ENCODE measurements at regions of chr14 and their contacts with region 1.

Region 1: GRCh38 chr14:68824517-68825347 is 31.9 kb upstream of the ZFP36L1 start:
- DNase-seq: peak; percentile 78 to 97
- H3K4me3 ChIP-seq: no peak overlapping the region
- H3K27ac ChIP-seq: no peak overlapping the region
- H3K4me1 ChIP-seq: peaks cover 0 to 7% (median 2%) of the 10 kb centered on the region in 4 experiments; a peak in 3 of 7 replicates
- H3K27me3 ChIP-seq: no peaks in the 10 kb centered on the region
- CTCF ChIP-seq: peak; percentile 93 to 98 (median 96)
- EP300 ChIP-seq: no peak
- POLR2A ChIP-seq: no peak
- RAD21 ChIP-seq: peak; percentile 88 to 89

Region 2: DNA sequence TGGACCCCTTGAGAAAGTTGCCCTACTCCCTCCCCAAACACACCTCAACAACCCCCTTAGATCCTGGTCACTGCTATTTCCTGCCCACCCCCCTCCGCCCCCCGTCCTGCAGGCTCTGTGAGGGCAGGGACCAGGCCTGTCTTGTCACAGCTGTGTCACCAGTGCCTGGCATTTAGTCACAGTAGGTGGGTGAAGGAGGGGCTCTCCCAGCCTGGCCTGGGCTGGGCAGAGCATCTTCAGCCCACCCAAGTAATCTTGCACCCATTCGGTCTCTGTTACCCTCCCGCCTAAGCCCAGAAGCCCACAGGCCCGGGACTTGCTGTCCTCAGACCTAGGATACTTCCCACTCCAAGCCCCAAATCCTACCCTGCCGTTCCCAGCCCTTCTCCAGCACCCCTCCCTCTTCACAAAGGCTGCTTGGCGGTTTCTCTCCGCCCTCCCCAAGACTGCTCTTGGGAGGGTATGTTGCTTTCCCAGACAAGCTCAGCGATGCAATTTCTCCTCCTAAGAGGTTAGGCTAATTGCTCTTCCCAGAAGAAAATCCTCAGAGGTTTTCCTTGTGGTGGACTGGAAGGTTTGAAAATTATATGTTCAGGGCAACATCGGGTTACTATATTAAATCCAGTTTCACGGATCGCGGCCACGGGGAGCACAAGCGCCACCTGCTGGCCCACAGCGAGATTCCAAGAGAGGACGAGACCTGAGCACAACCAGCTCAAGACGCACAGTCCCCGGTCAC is 18.9 kb after region 1 on chr14:
- CTCF ChIA-PET with region 1: interaction called, 47 read pairs
- POLR2A ChIA-PET with region 1: no interaction called
- DNase-seq: peak; percentile 50 to 89
- H3K4me3 ChIP-seq: peak overlapping the region; percentile 38 to 63 (median 56); a peak in 7 of 8 replicates
- H3K27ac ChIP-seq: no peak overlapping the region
- H3K4me1 ChIP-seq: peaks cover 0 to 6% (median 3%) of the 10 kb centered on the region in 4 experiments; a peak in 5 of 7 replicates
- H3K27me3 ChIP-seq: no peaks in the 10 kb centered on the region
- CTCF ChIP-seq: peak; percentile 78 to 93 (median 87)
- EP300 ChIP-seq: no peak
- POLR2A ChIP-seq: peak in 1 of 2 experiments; percentile 24; a peak in 1 of 3 replicates
- RAD21 ChIP-seq: peak; percentile 76 to 82

Region 3: DNA sequence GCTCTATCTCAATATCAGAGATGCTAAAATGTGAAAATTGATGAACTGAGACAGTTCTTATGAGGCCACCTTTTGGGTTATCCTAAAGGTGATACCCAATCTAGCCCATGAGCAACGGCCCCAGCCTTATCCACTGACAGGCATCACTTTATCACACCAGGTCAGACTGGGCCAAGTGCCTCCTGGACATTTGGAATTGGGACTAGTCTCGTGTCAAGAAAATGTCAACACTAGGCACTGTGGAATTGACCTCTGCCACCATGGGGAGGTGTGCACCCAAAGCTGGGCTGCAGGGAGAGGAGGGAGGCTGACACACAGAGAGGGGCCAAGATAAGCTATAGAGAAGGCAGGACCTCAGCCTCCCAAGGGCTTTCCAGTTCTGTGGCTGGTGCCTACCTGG is 46.7 kb after region 1 on chr14:
- CTCF ChIA-PET with region 1: no interaction called
- POLR2A ChIA-PET with region 1: no interaction called
- DNase-seq: no peak
- H3K4me3 ChIP-seq: no peak overlapping the region
- H3K27ac ChIP-seq: no peak overlapping the region
- H3K4me1 ChIP-seq: no peaks in the 10 kb centered on the region
- H3K27me3 ChIP-seq: no peaks in the 10 kb centered on the region
- CTCF ChIP-seq: no peak
- EP300 ChIP-seq: no peak
- POLR2A ChIP-seq: no peak
- RAD21 ChIP-seq: no peak